Naive thymus-derived CD4-positive, alpha-beta T cell (primary cell): ENCODE measurements at regions of chr5 and their contacts with region 1.

Region 1: GRCh38 chr5:62305715-62306322 is at the start of gene KIF2A:
- DNase-seq: peak; percentile 87 to 96 (median 94)
- ATAC-seq: peak; percentile 94
- H3K4me3 ChIP-seq: peak within 1 kb of the TSS; percentile 79
- H3K4me3 Mint-ChIP-seq: peak within 1 kb of the TSS; percentile 93 to 100 (median 98)
- H3K27ac ChIP-seq: peak within 1 kb of the TSS; percentile 81
- H3K27ac Mint-ChIP-seq: peak within 1 kb of the TSS; percentile 92 to 100 (median 98)
- H3K4me1 ChIP-seq: peaks cover 32 to 38% of the 10 kb centered on the region in 2 donors
- H3K4me1 Mint-ChIP-seq: peaks cover 27 to 60% (median 48%) of the 10 kb centered on the region in 7 donors
- H3K27me3 ChIP-seq: no peaks in the 10 kb centered on the region
- H3K27me3 Mint-ChIP-seq: no peaks in the 10 kb centered on the region
- total RNA-seq, gene KIF2A: 73.5 to 179 (median 142) TPM

Region 2: GRCh38 chr5:61408476-61409168 is 897.2 kb before region 1 on chr5:
- CTCF ChIA-PET with region 1: no interaction called
- POLR2A ChIA-PET with region 1: no interaction called
- intact Hi-C with region 1: loop called in 1 of 2 experiments (anchors 5 kb)
- DNase-seq: peak; percentile 92 to 98 (median 95)
- ATAC-seq: peak; percentile 98
- H3K4me3 ChIP-seq: peak overlapping the region; percentile 36
- H3K4me3 Mint-ChIP-seq: peak overlapping the region; percentile 74 to 94 (median 84)
- H3K27ac ChIP-seq: peak overlapping the region; percentile 32
- H3K27ac Mint-ChIP-seq: peak overlapping the region; percentile 59 to 98 (median 91)
- H3K4me1 ChIP-seq: peaks cover 12 to 14% of the 10 kb centered on the region in 2 donors
- H3K4me1 Mint-ChIP-seq: peaks cover 22 to 38% (median 32%) of the 10 kb centered on the region in 7 donors
- H3K27me3 ChIP-seq: no peaks in the 10 kb centered on the region
- H3K27me3 Mint-ChIP-seq: peaks cover 0 to 15% (median 0%) of the 10 kb centered on the region in 5 donors

Region 3: DNA sequence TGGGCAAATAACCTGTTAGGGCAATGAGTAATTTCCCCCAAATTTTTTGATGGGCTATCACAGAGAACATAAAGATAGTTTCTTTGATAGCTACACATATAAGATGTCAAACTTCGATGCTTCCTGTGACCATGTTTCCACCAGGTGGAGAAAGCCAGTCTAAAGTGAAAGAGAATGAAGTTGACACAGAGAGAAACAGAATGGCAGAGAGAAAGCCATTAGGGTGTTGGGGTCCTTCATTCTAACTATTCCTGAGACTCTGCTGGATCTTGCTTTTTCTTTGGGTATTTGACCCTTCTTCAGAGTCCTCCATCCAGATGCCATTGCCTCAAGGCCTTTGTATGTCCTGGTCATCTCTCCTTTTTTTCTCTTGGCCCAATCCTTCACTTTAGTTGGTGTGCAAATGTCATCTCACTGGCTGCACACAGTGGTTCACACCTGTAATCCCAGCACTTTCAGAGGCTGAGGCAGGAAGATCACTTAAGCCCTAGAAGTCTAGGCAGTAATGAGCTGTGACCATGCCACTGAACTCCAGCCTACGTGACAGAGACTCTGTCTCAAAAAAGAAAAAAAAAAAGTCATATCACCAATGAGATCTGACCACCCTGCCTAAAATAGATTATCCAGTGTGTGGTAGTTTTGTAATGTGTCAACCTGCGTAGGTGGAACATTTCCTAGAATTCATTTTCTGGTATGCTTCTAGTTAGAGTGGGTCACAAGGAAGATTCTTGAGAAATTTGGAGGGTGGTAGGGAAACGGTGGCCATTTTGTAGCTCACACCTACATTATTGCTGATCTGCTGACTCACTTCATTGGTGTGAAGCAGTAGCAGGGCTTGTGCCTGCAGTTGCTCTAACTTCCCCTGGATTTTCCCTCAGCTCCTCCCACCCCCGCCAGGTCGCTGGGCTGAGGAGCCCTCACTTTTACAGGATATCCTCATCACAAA is 20.6 kb before region 1 on chr5:
- CTCF ChIA-PET with region 1: no interaction called
- POLR2A ChIA-PET with region 1: interaction called, 5 read pairs
- intact Hi-C with region 1: loop called in 1 of 2 experiments (anchors 1 kb)
- DNase-seq: peak in 3 of 9 donors; percentile 15 to 78 (median 19)
- ATAC-seq: peak; percentile 34
- H3K4me3 ChIP-seq: no peak overlapping the region
- H3K4me3 Mint-ChIP-seq: peak overlapping the region in 1 of 10 donors; percentile 75
- H3K27ac ChIP-seq: no peak overlapping the region
- H3K27ac Mint-ChIP-seq: peak overlapping the region in 5 of 9 donors; percentile 2 to 96 (median 37)
- H3K4me1 ChIP-seq: peaks cover 2 to 30% of the 10 kb centered on the region in 2 donors
- H3K4me1 Mint-ChIP-seq: peaks cover 3 to 63% (median 34%) of the 10 kb centered on the region in 7 donors
- H3K27me3 ChIP-seq: no peaks in the 10 kb centered on the region
- H3K27me3 Mint-ChIP-seq: no peaks in the 10 kb centered on the region

Region 4: DNA sequence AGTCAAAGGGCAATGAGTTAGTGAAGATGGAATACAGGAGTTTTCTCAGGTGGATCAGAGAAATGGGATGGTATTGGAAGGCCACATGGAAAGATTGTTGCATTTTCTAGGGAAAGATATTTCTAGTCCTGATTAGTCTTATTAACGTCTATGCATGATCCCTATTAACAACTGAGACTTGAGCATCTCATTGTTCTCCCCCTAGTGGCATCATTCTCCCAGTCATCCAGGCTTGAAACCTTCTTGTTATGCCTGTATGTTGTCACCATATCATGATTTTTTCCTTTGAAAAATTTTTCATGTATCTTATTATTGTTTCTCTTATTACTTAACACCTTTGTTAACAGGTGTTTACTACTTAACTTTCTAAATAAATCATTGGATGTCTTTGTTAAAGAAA is 34.6 kb after region 1 on chr5:
- CTCF ChIA-PET with region 1: interaction called, 3 read pairs
- POLR2A ChIA-PET with region 1: interaction called, 5 read pairs
- intact Hi-C with region 1: loop called (anchors 1 to 2 kb)
- DNase-seq: peak in 2 of 9 donors; percentile 18 to 37
- ATAC-seq: peak; percentile 31
- H3K4me3 ChIP-seq: no peak overlapping the region
- H3K4me3 Mint-ChIP-seq: peak overlapping the region in 1 of 10 donors; percentile 16
- H3K27ac ChIP-seq: no peak overlapping the region
- H3K27ac Mint-ChIP-seq: peak overlapping the region in 3 of 9 donors; percentile 7 to 21 (median 17)
- H3K4me1 ChIP-seq: peaks cover 16 to 19% of the 10 kb centered on the region in 2 donors
- H3K4me1 Mint-ChIP-seq: peaks cover 32 to 72% (median 66%) of the 10 kb centered on the region in 7 donors
- H3K27me3 ChIP-seq: no peaks in the 10 kb centered on the region
- H3K27me3 Mint-ChIP-seq: no peaks in the 10 kb centered on the region

Region 5: GRCh38 chr5:62403434-62404250 is 97.8 kb after region 1 on chr5 and contains the start of gene DIMT1:
- CTCF ChIA-PET with region 1: no interaction called
- POLR2A ChIA-PET with region 1: interaction called, 11 read pairs
- intact Hi-C with region 1: loop called (anchors 1 kb)
- DNase-seq: peak; percentile 79 to 92 (median 90)
- ATAC-seq: peak; percentile 99
- H3K4me3 ChIP-seq: peak within 1 kb of the TSS; percentile 99
- H3K4me3 Mint-ChIP-seq: peak within 1 kb of the TSS; percentile 93 to 100 (median 98)
- H3K27ac ChIP-seq: peak within 1 kb of the TSS; percentile 89
- H3K27ac Mint-ChIP-seq: peak within 1 kb of the TSS; percentile 87 to 98 (median 94)
- H3K4me1 ChIP-seq: peaks cover 12 to 13% of the 10 kb centered on the region in 2 donors
- H3K4me1 Mint-ChIP-seq: peaks cover 21 to 38% (median 35%) of the 10 kb centered on the region in 7 donors
- H3K27me3 ChIP-seq: no peaks in the 10 kb centered on the region
- H3K27me3 Mint-ChIP-seq: no peaks in the 10 kb centered on the region
- total RNA-seq, gene DIMT1: 18.3 to 28.8 (median 21.3) TPM

Region 6: DNA sequence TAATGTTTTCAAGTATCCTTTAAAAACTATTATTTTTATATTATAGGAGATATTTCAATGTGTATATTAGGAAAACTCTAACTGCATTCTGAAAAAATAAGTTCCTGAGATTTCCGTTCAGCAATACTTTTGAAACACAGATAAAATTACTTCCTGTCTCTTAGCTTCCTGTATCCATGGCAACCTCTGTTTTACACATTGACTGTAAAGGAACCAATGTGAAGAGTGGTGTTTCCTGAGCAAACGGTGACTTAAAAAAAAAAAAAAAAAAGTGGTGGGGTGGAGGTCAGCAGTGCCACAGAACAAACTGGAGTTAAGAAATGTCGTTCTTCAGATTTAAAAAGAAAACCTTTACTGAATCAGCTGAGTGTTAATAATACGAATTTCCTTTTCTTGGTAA is 272.7 kb after region 1 on chr5 and contains the start of gene LRRC70:
- CTCF ChIA-PET with region 1: no interaction called
- POLR2A ChIA-PET with region 1: no interaction called
- intact Hi-C with region 1: loop called (anchors 2 to 10 kb)
- DNase-seq: peak in 7 of 9 donors; percentile 66 to 88 (median 83)
- ATAC-seq: peak; percentile 95
- H3K4me3 ChIP-seq: no peak within 1 kb of the TSS
- H3K4me3 Mint-ChIP-seq: peak within 1 kb of the TSS; percentile 46 to 91 (median 78)
- H3K27ac ChIP-seq: peak within 1 kb of the TSS; percentile 64
- H3K27ac Mint-ChIP-seq: peak within 1 kb of the TSS; percentile 72 to 97 (median 85)
- H3K4me1 ChIP-seq: peaks cover 6 to 11% of the 10 kb centered on the region in 2 donors
- H3K4me1 Mint-ChIP-seq: peaks cover 17 to 71% (median 41%) of the 10 kb centered on the region in 7 donors
- H3K27me3 ChIP-seq: no peaks in the 10 kb centered on the region
- H3K27me3 Mint-ChIP-seq: no peaks in the 10 kb centered on the region
- total RNA-seq, gene LRRC70: 0.89 to 13.0 (median 2.1) TPM